CD14-positive monocyte (primary cell): ENCODE measurements at regions of chr1 and their contacts with region 1.

Region 1: GRCh38 chr1:36369061-36369861 is 16.5 kb downstream of the STK40 start:
- DNase-seq: peak; percentile 70 to 71 (median 71)
- H3K4me3 ChIP-seq: no peak overlapping the region
- H3K4me3 Mint-ChIP-seq: no peak overlapping the region
- H3K27ac ChIP-seq: peak overlapping the region; percentile 18 to 44
- H3K27ac Mint-ChIP-seq: peak overlapping the region; percentile 69 to 100 (median 98)
- H3K4me1 ChIP-seq: peaks cover 79 to 83% of the 10 kb centered on the region in 2 donors
- H3K4me1 Mint-ChIP-seq: peaks cover 76% of the 10 kb centered on the region
- H3K27me3 ChIP-seq: no peaks in the 10 kb centered on the region
- H3K27me3 Mint-ChIP-seq: no peaks in the 10 kb centered on the region
- CTCF ChIP-seq: peak; percentile 94

Region 2: GRCh38 chr1:36350659-36351226 is 18.5 kb before region 1 on chr1:
- intact Hi-C with region 1: loop called in 1 of 2 experiments (anchors 2 kb)
- DNase-seq: peak; percentile 42 to 73 (median 60)
- H3K4me3 ChIP-seq: peak overlapping the region in 1 of 3 experiments; percentile 7
- H3K4me3 Mint-ChIP-seq: peak overlapping the region; percentile 43 to 74
- H3K27ac ChIP-seq: peak overlapping the region; percentile 26 to 72
- H3K27ac Mint-ChIP-seq: peak overlapping the region; percentile 66 to 93 (median 80)
- H3K4me1 ChIP-seq: peaks cover 34 to 41% of the 10 kb centered on the region in 2 donors
- H3K4me1 Mint-ChIP-seq: peaks cover 37% of the 10 kb centered on the region
- H3K27me3 ChIP-seq: no peaks in the 10 kb centered on the region
- H3K27me3 Mint-ChIP-seq: no peaks in the 10 kb centered on the region
- CTCF ChIP-seq: no peak